Common myeloid progenitor, CD34-positive (primary cell): ENCODE measurements at regions of chr3 and their contacts with region 1.

Region 1: GRCh38 chr3:4493014-4493940 is at the start of gene ITPR1:
- DNase-seq: peak; percentile 99 to 100 (median 100)
- H3K4me3 ChIP-seq: peak within 1 kb of the TSS; percentile 83 to 97 (median 95)
- H3K27ac ChIP-seq: peak within 1 kb of the TSS; percentile 92 to 95
- H3K4me1 ChIP-seq: peaks cover 22 to 42% (median 37%) of the 10 kb centered on the region in 4 experiments
- H3K27me3 ChIP-seq: no peaks in the 10 kb centered on the region

Region 2: GRCh38 chr3:4350789-4351163 is 142.5 kb before region 1 on chr3:
- CTCF ChIA-PET with region 1: interaction called, 11 read pairs
- POLR2A ChIA-PET with region 1: interaction called, 8 read pairs
- DNase-seq: peak; percentile 85 to 92 (median 89)
- H3K4me3 ChIP-seq: peak overlapping the region in 5 of 7 experiments; percentile 59 to 83 (median 75)
- H3K27ac ChIP-seq: peak overlapping the region in 1 of 2 experiments; percentile 77
- H3K4me1 ChIP-seq: peaks cover 4 to 14% (median 12%) of the 10 kb centered on the region in 4 experiments
- H3K27me3 ChIP-seq: no peaks in the 10 kb centered on the region

Region 3: DNA sequence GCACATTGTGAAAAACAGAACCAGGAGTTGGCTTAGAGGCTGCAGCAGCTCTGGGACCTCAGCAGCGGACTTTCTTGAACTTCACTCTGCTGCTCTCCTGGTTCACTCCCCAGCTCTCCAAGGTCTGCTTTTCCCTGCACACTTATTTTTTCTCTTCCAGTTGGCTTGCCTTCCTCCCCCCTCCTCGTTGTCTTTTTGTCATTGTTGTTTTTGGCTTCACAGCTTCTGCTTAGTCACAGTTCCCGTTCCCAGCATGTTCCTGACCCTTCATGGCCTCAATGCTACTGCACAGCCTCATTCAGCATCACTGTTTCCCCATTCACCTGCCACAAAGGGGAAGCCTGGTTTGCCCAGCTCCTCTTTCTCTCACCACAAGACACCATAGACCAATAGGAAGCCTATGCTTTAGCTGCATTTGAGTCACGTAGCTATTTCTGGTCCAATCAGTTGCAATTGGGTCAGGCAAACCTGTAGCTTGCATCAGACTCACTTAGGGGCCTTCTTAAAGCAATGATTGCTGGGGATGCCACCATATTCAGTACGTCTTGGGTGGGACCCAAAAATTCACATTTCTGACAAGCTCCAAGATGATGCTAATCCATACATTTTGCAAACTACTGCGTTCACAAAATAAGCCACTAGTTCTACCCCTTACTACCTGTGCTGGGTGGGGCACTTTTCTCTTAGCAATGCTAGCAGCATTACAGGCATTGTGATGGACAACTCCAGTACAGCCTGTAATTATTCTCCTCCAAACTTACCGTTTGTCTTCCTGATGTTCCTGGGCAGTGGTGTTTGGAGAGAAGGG is 18.4 kb before region 1 on chr3:
- CTCF ChIA-PET with region 1: interaction called, 11 read pairs
- POLR2A ChIA-PET with region 1: interaction called, 19 read pairs
- DNase-seq: peak; percentile 72 to 96 (median 95)
- H3K4me3 ChIP-seq: peak overlapping the region in 4 of 7 experiments; percentile 27 to 53 (median 38)
- H3K27ac ChIP-seq: peak overlapping the region; percentile 10 to 56
- H3K4me1 ChIP-seq: peaks cover 2 to 49% (median 15%) of the 10 kb centered on the region in 4 experiments
- H3K27me3 ChIP-seq: no peaks in the 10 kb centered on the region

Region 4: GRCh38 chr3:4512895-4513616 is 19.8 kb after region 1 on chr3:
- CTCF ChIA-PET with region 1: interaction called, 21 read pairs
- POLR2A ChIA-PET with region 1: interaction called, 12 read pairs
- DNase-seq: peak in 1 of 3 donors; percentile 72
- H3K4me3 ChIP-seq: peak overlapping the region in 1 of 7 experiments; percentile 0
- H3K27ac ChIP-seq: peak overlapping the region in 1 of 2 experiments; percentile 39
- H3K4me1 ChIP-seq: peaks cover 18 to 76% (median 56%) of the 10 kb centered on the region in 4 experiments
- H3K27me3 ChIP-seq: no peaks in the 10 kb centered on the region

Region 5: GRCh38 chr3:4584456-4585249 is 91.4 kb after region 1 on chr3:
- CTCF ChIA-PET with region 1: interaction called, 6 read pairs
- POLR2A ChIA-PET with region 1: interaction called, 11 read pairs
- DNase-seq: peak; percentile 63 to 82 (median 80)
- H3K4me3 ChIP-seq: peak overlapping the region in 6 of 7 experiments; percentile 30 to 78 (median 61)
- H3K27ac ChIP-seq: peak overlapping the region; percentile 29 to 82
- H3K4me1 ChIP-seq: peaks cover 0 to 84% (median 60%) of the 10 kb centered on the region in 4 experiments
- H3K27me3 ChIP-seq: no peaks in the 10 kb centered on the region